ENCODE measurements at regions of chr14 and their contacts with region 1.

Region 1: DNA sequence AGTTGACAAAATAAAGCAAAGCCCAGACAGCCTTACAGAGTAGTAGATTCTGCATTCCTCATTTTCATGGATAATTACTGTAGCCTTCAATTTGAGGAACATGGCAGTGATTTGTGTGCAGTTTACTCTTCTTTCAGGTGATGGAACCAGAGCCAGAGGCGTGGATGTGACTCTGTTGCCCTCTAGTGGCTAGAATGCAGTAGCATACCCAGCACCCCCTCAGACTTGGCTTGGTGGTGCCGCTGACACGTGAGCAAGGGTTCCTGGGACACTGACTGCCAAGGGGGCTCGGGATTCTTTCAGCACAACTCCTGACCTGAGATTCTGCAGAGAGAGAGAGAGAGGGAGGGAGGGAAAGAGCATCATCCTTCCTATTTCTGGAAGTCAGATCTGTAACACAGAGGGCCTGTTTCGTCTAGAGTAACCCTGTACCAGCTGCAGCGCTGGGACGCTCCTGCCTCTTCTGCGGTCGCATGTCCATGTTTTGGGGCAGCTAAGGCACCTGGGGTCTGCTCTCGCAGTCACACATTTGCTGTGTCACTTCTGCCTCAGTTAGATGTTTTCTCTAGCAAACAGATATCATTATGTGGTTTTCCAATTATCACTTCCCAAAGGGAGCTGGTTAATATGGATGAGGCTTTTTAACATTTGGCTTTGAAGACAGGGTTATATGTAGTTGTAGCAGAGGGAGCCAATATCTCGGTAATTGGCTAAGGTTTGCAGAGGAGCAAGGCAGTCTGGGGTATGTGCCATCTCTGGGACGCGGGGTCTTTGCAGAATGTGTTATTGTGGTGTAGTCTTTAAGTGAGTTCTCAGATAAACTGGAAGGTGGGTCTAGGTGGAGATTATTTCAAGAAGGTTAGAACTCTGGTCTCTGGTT is 428.1 kb downstream of the NRXN3 start:
- DNase-seq: no peak
- ATAC-seq: peak; percentile 99
- H3K4me3 ChIP-seq: no peak overlapping the region
- H3K27ac ChIP-seq: no peak overlapping the region
- H3K4me1 ChIP-seq: no peaks in the 10 kb centered on the region
- H3K27me3 ChIP-seq: no peaks in the 10 kb centered on the region
- CTCF ChIP-seq: peak; percentile 94 to 96 (median 94)
- EP300 ChIP-seq: no peak
- POLR2A ChIP-seq: no peak
- RAD21 ChIP-seq: peak; percentile 87

Region 2: DNA sequence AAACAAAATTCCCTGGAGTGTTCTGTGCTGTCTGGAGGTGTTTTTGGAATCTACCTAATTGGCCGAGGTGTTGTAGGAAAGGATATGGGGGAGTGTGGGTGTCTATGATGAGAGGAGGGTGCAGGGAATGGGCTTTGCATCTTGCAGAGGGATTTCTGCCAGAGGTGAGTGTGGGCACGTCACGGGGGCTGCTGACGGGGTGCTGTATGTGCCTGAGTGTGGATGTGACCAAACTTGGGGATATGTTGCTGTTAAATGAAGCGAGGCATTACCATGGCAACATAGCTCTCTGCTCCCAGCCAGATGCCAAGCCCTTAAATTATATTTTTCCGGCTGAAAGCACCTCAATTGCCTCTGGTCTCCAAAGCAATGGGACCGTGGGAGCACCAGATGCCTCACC is 937.5 kb before region 1 on chr14:
- CTCF ChIA-PET with region 1: no interaction called
- POLR2A ChIA-PET with region 1: no interaction called
- RAD21 ChIA-PET with region 1: no interaction called
- SMC1A ChIA-PET with region 1: no interaction called
- in situ Hi-C with region 1: loop called (anchors 25 kb)
- intact Hi-C with region 1: no loop called
- DNase-seq: no peak
- ATAC-seq: no peak
- H3K4me3 ChIP-seq: no peak overlapping the region
- H3K27ac ChIP-seq: no peak overlapping the region
- H3K4me1 ChIP-seq: no peaks in the 10 kb centered on the region
- H3K27me3 ChIP-seq: no peaks in the 10 kb centered on the region
- CTCF ChIP-seq: no peak
- EP300 ChIP-seq: no peak
- POLR2A ChIP-seq: no peak
- RAD21 ChIP-seq: no peak

Region 3: GRCh38 chr14:78022059-78022458 is 576.2 kb before region 1 on chr14:
- CTCF ChIA-PET with region 1: interaction called, 4 read pairs
- POLR2A ChIA-PET with region 1: no interaction called
- RAD21 ChIA-PET with region 1: no interaction called
- SMC1A ChIA-PET with region 1: no interaction called
- in situ Hi-C with region 1: no loop called
- intact Hi-C with region 1: loop called (anchors 2 kb)
- DNase-seq: peak; percentile 25
- ATAC-seq: peak; percentile 95
- H3K4me3 ChIP-seq: no peak overlapping the region
- H3K27ac ChIP-seq: no peak overlapping the region
- H3K4me1 ChIP-seq: no peaks in the 10 kb centered on the region
- H3K27me3 ChIP-seq: no peaks in the 10 kb centered on the region; a peak in 1 of 4 replicates
- CTCF ChIP-seq: peak; percentile 49 to 60 (median 53)
- EP300 ChIP-seq: no peak
- POLR2A ChIP-seq: no peak
- RAD21 ChIP-seq: peak; percentile 72

Region 4: DNA sequence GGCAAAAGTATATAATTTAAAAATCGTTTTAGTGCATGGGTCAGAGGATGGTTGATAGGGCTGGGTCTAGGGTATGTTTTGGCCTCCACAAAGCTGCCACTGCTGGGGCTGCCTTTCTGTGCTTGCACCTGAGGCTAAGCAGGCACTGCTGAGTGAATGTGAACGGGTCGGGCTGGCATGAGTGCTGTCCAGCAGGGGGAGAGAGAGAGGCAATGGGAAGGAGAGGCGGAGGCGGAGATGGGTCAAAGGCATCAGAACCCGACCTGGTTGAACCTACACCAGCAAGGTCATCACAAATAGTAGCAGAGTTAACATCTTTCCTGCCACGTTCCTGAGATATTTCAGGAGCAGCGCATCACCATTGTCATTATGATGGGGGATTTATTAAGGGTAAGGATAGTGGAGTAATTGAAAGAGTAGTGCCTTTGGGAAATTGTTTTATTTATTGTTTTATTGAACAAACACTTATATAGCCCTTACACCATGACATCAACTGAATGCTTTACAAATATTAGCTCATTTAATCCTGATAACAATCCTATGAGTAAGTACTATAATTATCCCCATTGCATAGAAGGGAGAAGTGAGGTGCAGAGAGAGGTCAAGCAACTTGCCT is 433.9 kb before region 1 on chr14:
- CTCF ChIA-PET with region 1: no interaction called
- POLR2A ChIA-PET with region 1: no interaction called
- RAD21 ChIA-PET with region 1: no interaction called
- SMC1A ChIA-PET with region 1: no interaction called
- in situ Hi-C with region 1: no loop called
- intact Hi-C with region 1: loop called (anchors 1 kb)
- DNase-seq: no peak
- ATAC-seq: peak; percentile 85
- H3K4me3 ChIP-seq: no peak overlapping the region
- H3K27ac ChIP-seq: no peak overlapping the region
- H3K4me1 ChIP-seq: no peaks in the 10 kb centered on the region
- H3K27me3 ChIP-seq: peaks cover 2 to 3% of the 10 kb centered on the region in 2 experiments; a peak in 2 of 4 replicates
- CTCF ChIP-seq: peak; percentile 45 to 79 (median 71)
- EP300 ChIP-seq: no peak
- POLR2A ChIP-seq: no peak
- RAD21 ChIP-seq: peak; percentile 44

Region 5: GRCh38 chr14:78498062-78498595 is 100.2 kb before region 1 on chr14:
- CTCF ChIA-PET with region 1: no interaction called
- POLR2A ChIA-PET with region 1: no interaction called
- RAD21 ChIA-PET with region 1: no interaction called
- SMC1A ChIA-PET with region 1: no interaction called
- in situ Hi-C with region 1: no loop called
- intact Hi-C with region 1: no loop called
- DNase-seq: no peak
- ATAC-seq: no peak
- H3K4me3 ChIP-seq: no peak overlapping the region
- H3K27ac ChIP-seq: no peak overlapping the region
- H3K4me1 ChIP-seq: no peaks in the 10 kb centered on the region
- H3K27me3 ChIP-seq: no peaks in the 10 kb centered on the region
- CTCF ChIP-seq: no peak
- EP300 ChIP-seq: no peak
- POLR2A ChIP-seq: no peak
- RAD21 ChIP-seq: no peak